Left ventricle myocardium inferior (tissue), 1 donor: ENCODE measurements at regions of chr4 and their contacts with region 1.

Region 1: GRCh38 chr4:176150356-176150682 is 45.1 kb downstream of the SPATA4 start:
- DNase-seq: no peak
- H3K4me3 ChIP-seq: no peak overlapping the region
- H3K27ac ChIP-seq: no peak overlapping the region
- H3K4me1 ChIP-seq: peaks cover 6% of the 10 kb centered on the region
- H3K27me3 ChIP-seq: no peaks in the 10 kb centered on the region
- CTCF ChIP-seq: peak; percentile 61

Region 2: DNA sequence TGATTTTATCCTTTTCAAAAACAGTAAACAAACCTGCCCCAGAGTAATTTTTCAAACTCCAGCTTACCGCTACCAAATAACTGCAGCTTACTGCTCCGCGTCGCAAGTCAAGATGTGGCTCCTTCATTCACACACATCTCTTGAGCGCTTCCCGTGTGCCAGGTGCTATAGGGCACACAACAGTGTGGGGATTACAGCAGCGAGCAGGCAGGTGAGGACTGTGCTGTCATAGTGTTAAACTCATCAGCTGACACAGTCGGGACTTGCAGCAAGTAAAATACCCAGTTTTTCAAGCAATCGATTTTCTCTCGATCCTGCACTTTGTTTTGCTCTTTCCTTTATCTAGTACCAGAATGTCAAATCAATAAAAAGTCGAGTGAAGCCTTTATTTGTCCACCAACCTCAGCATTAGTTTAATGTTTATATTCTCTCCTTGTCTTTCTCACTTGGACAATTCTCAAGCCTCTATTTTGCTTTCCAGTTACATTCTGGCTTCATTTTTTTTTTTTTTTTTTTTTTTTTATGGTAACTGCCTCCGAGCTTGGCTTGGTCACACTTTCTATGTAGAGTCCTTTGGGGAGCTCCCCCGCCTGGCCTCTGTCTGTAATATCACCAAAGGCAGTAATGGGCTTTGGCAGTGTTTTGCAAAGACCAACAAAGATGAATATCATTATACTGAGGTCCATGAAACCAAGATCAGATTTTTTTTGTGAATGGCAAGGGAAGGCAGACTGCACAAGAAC is 127.0 kb after region 1 on chr4:
- intact Hi-C with region 1: loop called (anchors 10 kb)
- DNase-seq: peak; percentile 37
- H3K4me3 ChIP-seq: no peak overlapping the region
- H3K27ac ChIP-seq: no peak overlapping the region
- H3K4me1 ChIP-seq: no peaks in the 10 kb centered on the region
- H3K27me3 ChIP-seq: no peaks in the 10 kb centered on the region
- CTCF ChIP-seq: peak; percentile 69